ENCODE measurements at regions of chr10 and their contacts with region 1.

Region 1: GRCh38 chr10:42866115-42866995 is 83.8 kb downstream of the BMS1 start:
- DNase-seq: peak; percentile 68 to 94 (median 84)
- ATAC-seq: peak; percentile 100
- H3K4me3 ChIP-seq: peak overlapping the region in 1 of 4 donors; percentile 31
- H3K27ac ChIP-seq: no peak overlapping the region
- H3K4me1 ChIP-seq: peaks cover 0 to 5% (median 0%) of the 10 kb centered on the region in 3 donors
- H3K27me3 ChIP-seq: peaks cover 0 to 19% (median 4%) of the 10 kb centered on the region in 4 donors
- CTCF ChIP-seq: peak; percentile 59 to 83 (median 74)

Region 2: DNA sequence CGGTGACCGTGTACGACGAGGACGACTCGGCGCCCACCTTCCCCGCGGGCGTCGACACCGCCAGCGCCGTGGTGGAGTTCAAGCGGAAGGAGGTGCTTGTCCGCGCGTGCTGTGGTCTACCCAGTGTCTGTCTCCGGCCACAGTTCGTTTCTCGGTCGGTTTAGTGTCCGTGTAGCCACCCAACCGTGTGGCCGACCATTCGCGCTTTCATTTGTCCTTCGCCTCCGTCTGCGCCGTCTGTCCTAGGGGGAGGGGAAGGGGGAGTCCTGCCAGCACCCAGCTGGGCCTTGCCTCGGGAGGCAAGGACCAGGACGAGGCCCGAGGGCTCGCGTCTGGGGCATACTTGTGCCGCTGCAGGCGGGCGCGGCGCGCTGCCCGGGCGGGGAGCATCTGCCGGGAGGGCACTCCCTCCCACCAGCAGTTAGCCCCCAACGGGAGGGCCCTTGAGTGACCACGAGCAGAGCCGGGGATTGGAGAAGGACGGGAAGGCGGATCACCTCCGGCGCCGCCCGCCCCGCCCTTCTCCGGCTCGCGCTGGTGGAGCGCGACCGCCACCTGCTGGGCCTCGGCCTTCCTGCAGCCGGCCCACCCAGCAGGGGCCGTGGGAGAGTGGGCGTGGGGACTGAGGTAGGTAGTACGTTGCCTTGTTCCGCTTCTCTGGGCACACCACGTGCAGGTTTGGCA is 238.9 kb after region 1 on chr10:
- intact Hi-C with region 1: loop called (anchors 2 to 10 kb)
- DNase-seq: peak; percentile 53 to 90 (median 77)
- ATAC-seq: peak; percentile 96 to 98 (median 96)
- H3K4me3 ChIP-seq: peak overlapping the region; percentile 30 to 53 (median 48)
- H3K27ac ChIP-seq: no peak overlapping the region
- H3K4me1 ChIP-seq: peaks cover 0 to 5% (median 3%) of the 10 kb centered on the region in 3 donors
- H3K27me3 ChIP-seq: no peaks in the 10 kb centered on the region
- CTCF ChIP-seq: peak; percentile 97 to 100 (median 100)

Measured in pancreas (tissue), 10 donors.